ENCODE measurements at regions of chr6 and their contacts with region 1.

Region 1: GRCh38 chr6:112188906-112189305 is 65.5 kb downstream of the LAMA4 start:
- DNase-seq: no peak
- H3K4me3 ChIP-seq: no peak overlapping the region
- H3K27ac ChIP-seq: no peak overlapping the region
- H3K4me1 ChIP-seq: no peaks in the 10 kb centered on the region
- H3K27me3 ChIP-seq: no peaks in the 10 kb centered on the region
- CTCF ChIP-seq: no peak
- POLR2A ChIP-seq: no peak

Region 2: GRCh38 chr6:112223070-112223861 is 34.4 kb after region 1 on chr6:
- intact Hi-C with region 1: loop called (anchors 5 kb)
- DNase-seq: no peak
- H3K4me3 ChIP-seq: no peak overlapping the region
- H3K27ac ChIP-seq: peak overlapping the region; percentile 40 to 53
- H3K4me1 ChIP-seq: no peaks in the 10 kb centered on the region
- H3K27me3 ChIP-seq: no peaks in the 10 kb centered on the region
- CTCF ChIP-seq: no peak
- POLR2A ChIP-seq: no peak

Region 3: DNA sequence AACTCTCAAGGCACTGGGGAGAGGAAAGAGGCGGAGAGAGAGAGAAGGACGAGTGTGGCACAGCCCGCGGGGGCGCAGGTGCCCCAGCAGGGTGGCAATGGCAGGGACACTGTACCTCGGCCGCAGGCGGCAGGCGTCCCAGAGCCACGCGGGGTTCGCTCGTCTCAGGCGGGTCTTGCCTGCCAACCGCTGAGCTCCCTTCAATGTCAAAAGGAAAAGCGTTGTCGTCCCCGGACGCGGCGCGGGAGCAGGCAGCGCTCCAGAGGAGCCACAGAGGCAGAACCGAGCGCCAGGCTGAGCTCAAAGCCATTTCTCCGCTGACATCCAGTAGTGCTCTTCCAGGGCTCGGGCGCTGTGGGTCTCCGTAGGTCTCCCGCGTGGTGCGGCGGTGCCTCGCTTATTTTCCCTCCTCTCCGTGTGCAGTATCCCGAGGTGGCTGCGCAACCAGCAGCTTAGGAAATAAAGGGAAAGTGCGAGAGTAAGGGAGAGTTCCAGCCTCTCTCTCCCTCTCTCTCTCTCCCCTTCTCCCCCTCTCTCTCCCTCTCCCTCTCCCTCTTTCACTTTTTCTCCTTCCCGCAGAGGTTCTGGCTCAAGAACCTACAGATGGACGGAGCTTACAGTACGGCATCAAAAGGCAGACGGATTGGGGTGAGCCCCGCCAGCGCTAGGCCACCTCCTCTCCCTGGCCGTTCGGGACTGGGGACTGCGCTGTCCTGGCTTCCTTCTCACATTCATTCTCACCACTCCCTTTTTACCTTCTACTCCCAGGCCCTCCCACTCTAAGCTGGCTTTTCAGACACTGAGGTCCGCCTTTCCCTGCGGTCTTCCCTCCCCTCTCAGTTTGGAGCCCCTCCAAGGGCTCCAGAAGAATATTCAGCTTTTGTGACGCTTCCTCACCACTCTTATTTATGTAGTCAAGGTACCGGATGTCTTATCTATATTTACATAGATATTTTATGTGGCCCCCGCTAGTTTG is 65.2 kb after region 1 on chr6 and contains the start of gene LAMA4:
- intact Hi-C with region 1: loop called (anchors 5 kb)
- DNase-seq: no peak
- H3K4me3 ChIP-seq: peak within 1 kb of the TSS; percentile 36 to 49
- H3K27ac ChIP-seq: peak within 1 kb of the TSS; percentile 71 to 73
- H3K4me1 ChIP-seq: no peaks in the 10 kb centered on the region
- H3K27me3 ChIP-seq: no peaks in the 10 kb centered on the region
- CTCF ChIP-seq: no peak
- POLR2A ChIP-seq: peak; percentile 45
- total RNA-seq, gene LAMA4: 9.6 to 48.3 TPM